Activated naive CD4-positive, alpha-beta T cell treated with anti-CD3 and anti-CD28 coated beads for 36 hours (primary cell): ENCODE measurements at regions of chr17 and their contacts with region 1.

Region 1: GRCh38 chr17:76501018-76501826 is at the start of gene RHBDF2:
- DNase-seq: peak; percentile 97
- H3K4me3 Mint-ChIP-seq: peak within 1 kb of the TSS; percentile 83
- H3K27ac Mint-ChIP-seq: peak within 1 kb of the TSS; percentile 92
- H3K4me1 Mint-ChIP-seq: peaks cover 30% of the 10 kb centered on the region
- H3K27me3 Mint-ChIP-seq: no peaks in the 10 kb centered on the region
- total RNA-seq, gene RHBDF2: 13.3 to 13.4 TPM

Region 2: GRCh38 chr17:76353599-76354316 is 147.5 kb before region 1 on chr17 and contains the start of gene PRPSAP1:
- CTCF ChIA-PET with region 1: no interaction called
- intact Hi-C with region 1: loop called (anchors 1 kb)
- DNase-seq: peak; percentile 87
- H3K4me3 Mint-ChIP-seq: peak within 1 kb of the TSS; percentile 94
- H3K27ac Mint-ChIP-seq: peak within 1 kb of the TSS; percentile 98
- H3K4me1 Mint-ChIP-seq: peaks cover 19% of the 10 kb centered on the region
- H3K27me3 Mint-ChIP-seq: no peaks in the 10 kb centered on the region
- total RNA-seq, gene PRPSAP1: 30.1 to 33.3 TPM

Region 3: DNA sequence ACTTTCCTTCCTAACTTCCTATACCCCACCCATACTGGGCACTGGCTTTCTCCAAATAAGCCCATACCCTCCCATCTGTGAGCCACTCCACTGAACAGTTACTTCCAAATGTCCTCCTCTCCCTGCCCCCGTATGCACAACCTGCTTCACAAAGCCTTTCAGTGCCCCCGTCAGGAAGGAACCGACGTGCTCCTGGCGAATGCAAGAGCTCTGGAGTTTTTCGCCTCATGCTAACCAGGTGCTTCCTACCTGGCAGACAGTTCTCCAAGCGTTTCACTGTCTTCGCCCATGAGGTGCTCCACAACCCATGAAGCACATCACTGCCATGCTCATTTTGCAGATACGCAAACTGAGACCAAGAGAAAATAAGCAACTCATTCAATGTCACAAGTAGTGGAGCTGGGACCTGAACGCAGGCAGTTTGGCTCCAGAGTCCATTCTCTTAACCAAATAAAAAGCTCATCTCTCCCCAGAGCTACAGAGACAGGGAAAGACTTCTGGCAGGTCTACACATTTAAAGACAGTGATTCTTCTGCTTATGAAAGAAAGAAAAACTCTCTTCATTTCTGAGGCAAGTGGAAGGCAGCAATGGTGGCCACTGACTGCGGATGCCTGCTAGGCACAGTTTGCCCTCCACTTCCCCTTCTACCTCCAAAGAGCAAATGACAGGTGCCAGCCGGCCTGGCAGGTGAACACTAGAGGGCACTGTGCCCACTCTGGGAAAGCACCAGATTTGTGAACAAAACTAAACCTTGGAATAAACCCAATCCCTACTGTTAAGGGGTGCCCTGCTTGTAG is 93.0 kb before region 1 on chr17:
- CTCF ChIA-PET with region 1: interaction called, 22 read pairs
- intact Hi-C with region 1: loop called (anchors 1 kb)
- DNase-seq: peak; percentile 86
- H3K4me3 Mint-ChIP-seq: no peak overlapping the region
- H3K27ac Mint-ChIP-seq: no peak overlapping the region
- H3K4me1 Mint-ChIP-seq: peaks cover 8% of the 10 kb centered on the region
- H3K27me3 Mint-ChIP-seq: no peaks in the 10 kb centered on the region

Region 4: DNA sequence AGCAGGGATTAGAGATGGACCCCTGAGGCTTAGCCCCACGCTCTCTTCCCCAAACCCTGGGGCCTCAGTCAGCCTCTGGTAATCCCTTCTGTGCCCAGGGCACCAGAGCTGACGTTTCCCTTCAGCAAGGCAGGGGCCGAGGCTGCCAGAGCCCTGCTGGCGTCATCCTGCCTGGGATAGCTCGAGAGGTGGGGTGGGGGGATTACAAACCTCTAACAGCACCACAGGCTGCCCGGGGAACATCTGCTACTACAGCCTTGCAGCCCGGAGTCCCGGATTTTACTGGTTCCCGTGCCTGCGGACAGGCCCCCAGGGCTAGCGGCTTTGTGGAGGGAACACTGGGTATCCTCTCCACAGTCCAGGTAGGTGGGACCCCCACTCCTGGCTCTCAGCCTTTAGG is 33.9 kb before region 1 on chr17 and contains the start of gene AANAT:
- CTCF ChIA-PET with region 1: interaction called, 58 read pairs
- intact Hi-C with region 1: loop called (anchors 1 kb)
- DNase-seq: no peak
- H3K4me3 Mint-ChIP-seq: no peak within 1 kb of the TSS
- H3K27ac Mint-ChIP-seq: no peak within 1 kb of the TSS
- H3K4me1 Mint-ChIP-seq: peaks cover 2% of the 10 kb centered on the region
- H3K27me3 Mint-ChIP-seq: no peaks in the 10 kb centered on the region
- total RNA-seq, gene AANAT: not detected